ENCODE measurements at regions of chr22 and their contacts with region 1.

Region 1: GRCh38 chr22:43969989-43970755 is 14.9 kb downstream of the SAMM50 start:
- DNase-seq: no peak
- H3K4me3 ChIP-seq: no peak overlapping the region
- H3K27me3 ChIP-seq: no peaks in the 10 kb centered on the region
- CTCF ChIP-seq: no peak

Region 2: GRCh38 chr22:43955040-43955882 is 14.9 kb before region 1 on chr22 and contains the start of gene SAMM50:
- CTCF ChIA-PET with region 1: interaction called, 3 read pairs
- POLR2A ChIA-PET with region 1: interaction called, 23 read pairs
- DNase-seq: peak; percentile 58
- H3K4me3 ChIP-seq: peak within 1 kb of the TSS; percentile 83
- H3K27me3 ChIP-seq: no peaks in the 10 kb centered on the region
- CTCF ChIP-seq: peak; percentile 19; the same call in 1 of the 2 replicates
- polyA plus RNA-seq, gene SAMM50: 40.7 and 50.6 TPM in 2 replicates